Activated CD4-positive, alpha-beta T cell treated with anti-CD3 and anti-CD28 coated beads for 36 hours (primary cell): ENCODE measurements at regions of chr10 and their contacts with region 1.

Region 1: DNA sequence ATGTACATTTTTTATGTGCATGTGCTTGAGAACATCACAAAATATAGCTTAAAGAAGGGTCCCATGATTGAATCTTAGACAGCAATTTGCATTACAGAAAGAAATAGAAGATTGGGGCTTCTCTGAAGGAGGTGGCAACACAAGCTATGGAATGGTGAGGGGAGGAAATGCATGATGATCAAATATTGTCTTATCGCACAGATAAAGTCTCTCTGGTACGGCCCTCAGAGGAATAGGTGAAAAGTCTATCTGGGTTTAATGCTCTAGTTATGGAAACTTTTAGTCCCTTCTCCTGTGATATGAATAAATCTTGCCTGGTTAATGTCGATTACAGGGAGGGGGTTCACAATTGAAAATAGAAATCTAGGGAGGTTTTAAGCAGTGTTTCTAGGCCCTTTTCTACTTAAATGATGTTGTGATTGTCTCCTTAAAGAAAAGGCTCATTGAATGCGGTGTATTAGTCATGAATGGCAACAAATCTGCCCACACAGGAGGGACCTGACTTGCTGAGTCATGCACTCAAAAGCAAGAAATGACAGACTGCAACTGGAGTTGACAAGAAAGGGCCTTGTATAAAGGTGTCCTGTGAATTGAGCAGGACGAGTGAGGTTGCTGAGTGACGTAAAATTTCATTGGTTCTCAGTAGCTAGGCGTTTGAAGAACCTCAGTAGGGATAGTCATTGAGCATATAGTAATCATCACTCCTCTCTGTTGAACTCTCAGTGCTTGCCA is 133.4 kb upstream of the CSTF2T start:
- DNase-seq: peak; percentile 59
- ATAC-seq: peak; percentile 97
- H3K4me3 Mint-ChIP-seq: no peak overlapping the region
- H3K27ac Mint-ChIP-seq: no peak overlapping the region
- H3K4me1 Mint-ChIP-seq: peaks cover 7% of the 10 kb centered on the region
- H3K27me3 Mint-ChIP-seq: peaks cover 2% of the 10 kb centered on the region

Region 2: DNA sequence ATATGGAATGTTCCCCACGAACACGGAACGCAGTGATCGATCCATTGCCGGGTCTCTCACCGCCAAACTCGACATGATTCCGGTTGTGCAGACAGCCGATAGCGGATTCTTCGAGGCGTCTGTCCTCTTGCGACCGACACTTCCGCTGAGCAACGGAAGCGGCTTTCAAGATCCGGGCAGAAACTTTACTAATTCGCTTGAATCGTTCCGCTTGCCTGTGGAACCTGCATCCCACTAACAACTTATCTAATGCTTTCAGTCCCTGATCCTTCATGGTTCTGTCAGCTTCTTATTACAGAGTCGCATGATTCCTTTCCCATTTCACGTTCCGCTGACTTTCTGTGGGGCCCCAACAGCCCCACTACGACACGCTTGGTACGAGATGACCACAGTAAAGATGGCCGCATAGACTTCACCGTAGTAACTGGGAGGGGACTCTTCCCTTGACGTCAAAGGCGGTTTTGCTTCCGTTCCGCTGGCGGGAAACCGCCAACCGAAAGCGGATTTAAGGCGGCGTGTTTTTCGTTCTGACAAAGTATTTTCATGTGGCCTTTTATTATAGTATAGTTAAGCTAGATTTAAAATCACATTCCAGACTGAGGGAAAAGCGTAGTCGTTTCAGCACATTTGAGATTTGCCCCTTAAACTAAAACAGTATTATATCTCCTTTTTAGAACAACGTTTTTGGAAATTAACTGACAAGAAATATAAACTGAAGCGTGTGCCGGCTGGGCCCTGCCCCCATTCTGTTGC is 133.2 kb before region 1 on chr10 and contains the start of gene CSTF2T:
- CTCF ChIA-PET with region 1: no interaction called
- POLR2A ChIA-PET with region 1: no interaction called
- intact Hi-C with region 1: no loop called
- DNase-seq: peak; percentile 93
- ATAC-seq: peak; percentile 89
- H3K4me3 Mint-ChIP-seq: peak within 1 kb of the TSS; percentile 96
- H3K27ac Mint-ChIP-seq: peak within 1 kb of the TSS; percentile 100
- H3K4me1 Mint-ChIP-seq: peaks cover 51% of the 10 kb centered on the region
- H3K27me3 Mint-ChIP-seq: no peaks in the 10 kb centered on the region
- total RNA-seq, gene CSTF2T: 24.5 to 27.6 TPM

Region 3: DNA sequence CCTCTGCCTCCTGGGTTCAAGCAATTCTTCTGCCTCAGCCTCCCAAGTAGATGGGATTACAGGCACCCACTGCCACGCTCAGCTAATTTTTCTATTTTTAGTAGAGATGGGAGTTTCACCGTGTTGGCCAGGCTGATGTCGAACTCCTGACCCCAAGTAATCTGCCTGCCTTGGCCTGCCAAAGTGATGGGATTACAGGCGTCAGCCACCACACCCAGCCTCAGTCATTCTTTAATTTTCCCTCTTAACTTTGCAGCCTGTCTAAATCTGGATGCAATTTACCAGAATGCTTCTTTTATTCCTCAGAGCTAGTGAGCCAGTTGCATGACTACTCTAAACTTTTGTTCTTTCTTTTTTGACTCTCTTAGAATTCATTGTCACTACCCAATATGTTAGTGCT is 42.9 kb before region 1 on chr10:
- CTCF ChIA-PET with region 1: no interaction called
- POLR2A ChIA-PET with region 1: no interaction called
- intact Hi-C with region 1: loop called in 1 of 2 experiments (anchors 2 kb)
- DNase-seq: no peak
- ATAC-seq: no peak
- H3K4me3 Mint-ChIP-seq: no peak overlapping the region
- H3K27ac Mint-ChIP-seq: no peak overlapping the region
- H3K4me1 Mint-ChIP-seq: no peaks in the 10 kb centered on the region
- H3K27me3 Mint-ChIP-seq: peaks cover 7% of the 10 kb centered on the region

Region 4: GRCh38 chr10:51879238-51879637 is 46.4 kb after region 1 on chr10:
- CTCF ChIA-PET with region 1: no interaction called
- POLR2A ChIA-PET with region 1: no interaction called
- intact Hi-C with region 1: loop called in 1 of 2 experiments (anchors 2 kb)
- DNase-seq: peak; percentile 40
- ATAC-seq: peak; percentile 94
- H3K4me3 Mint-ChIP-seq: no peak overlapping the region
- H3K27ac Mint-ChIP-seq: peak overlapping the region; percentile 4
- H3K4me1 Mint-ChIP-seq: peaks cover 17% of the 10 kb centered on the region
- H3K27me3 Mint-ChIP-seq: no peaks in the 10 kb centered on the region

Region 5: DNA sequence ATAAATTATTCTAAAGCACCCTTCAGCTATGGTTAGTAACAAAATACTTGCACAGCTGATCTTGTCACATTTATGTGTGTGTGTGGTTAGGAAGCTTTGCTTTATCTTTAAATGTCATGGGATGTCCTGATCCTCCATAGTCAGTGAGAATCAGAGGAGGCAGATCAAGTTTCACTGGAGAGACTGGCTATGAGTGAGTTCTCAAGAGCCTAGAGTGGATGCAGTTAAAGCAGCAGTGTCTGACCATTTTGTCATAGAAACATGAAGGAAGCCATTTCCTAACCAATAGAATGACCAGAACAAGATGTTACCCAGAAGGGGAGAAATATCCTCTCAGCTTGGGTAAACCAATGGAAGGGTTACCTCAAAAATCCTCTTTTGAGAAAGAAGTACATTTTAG is 274.1 kb after region 1 on chr10:
- CTCF ChIA-PET with region 1: no interaction called
- POLR2A ChIA-PET with region 1: no interaction called
- intact Hi-C with region 1: no loop called
- DNase-seq: no peak
- ATAC-seq: no peak
- H3K4me3 Mint-ChIP-seq: no peak overlapping the region
- H3K27ac Mint-ChIP-seq: no peak overlapping the region
- H3K4me1 Mint-ChIP-seq: no peaks in the 10 kb centered on the region
- H3K27me3 Mint-ChIP-seq: no peaks in the 10 kb centered on the region